ENCODE measurements at regions of chr20 and their contacts with region 1.

Region 1: DNA sequence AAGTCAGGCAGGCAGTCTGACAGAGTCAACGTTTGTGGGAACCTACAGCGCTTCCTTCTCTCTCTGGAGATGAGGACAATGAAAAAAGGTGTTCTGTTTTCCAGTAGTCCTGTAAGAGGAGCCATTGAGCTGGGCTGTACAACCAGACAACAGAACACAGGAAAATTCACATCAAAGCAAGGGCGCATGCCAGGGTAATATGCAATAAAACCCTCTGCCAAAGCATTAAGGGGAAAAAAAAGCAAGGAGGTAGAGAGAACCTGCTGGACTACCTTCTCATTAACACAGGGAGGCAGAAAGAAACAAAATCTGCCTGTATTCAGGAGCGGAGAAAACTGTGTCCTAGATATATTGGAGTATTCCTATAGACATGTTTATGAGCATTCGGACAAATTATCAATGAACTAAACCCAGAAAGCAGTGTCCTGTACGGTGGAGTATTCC is 1.3 kb downstream of the RNF24 start:
- DNase-seq: peak; percentile 91
- H3K4me3 ChIP-seq: peak overlapping the region; percentile 7 to 91 (median 86)
- H3K27ac ChIP-seq: peak overlapping the region; percentile 61
- H3K4me1 ChIP-seq: peaks cover 24% of the 10 kb centered on the region
- H3K27me3 ChIP-seq: no peaks in the 10 kb centered on the region
- CTCF ChIP-seq: peak; percentile 68 to 91

Region 2: GRCh38 chr20:3781153-3781910 is 232.7 kb before region 1 on chr20 and contains the start of gene SPEF1:
- CTCF ChIA-PET with region 1: interaction called, 3 read pairs
- dilution Hi-C with region 1: loop called (anchors 5 kb)
- in situ Hi-C with region 1: no loop called
- intact Hi-C with region 1: no loop called
- DNase-seq: peak; percentile 88
- H3K4me3 ChIP-seq: peak within 1 kb of the TSS; percentile 2 to 55 (median 51)
- H3K27ac ChIP-seq: peak within 1 kb of the TSS; percentile 11
- H3K4me1 ChIP-seq: peaks cover 44% of the 10 kb centered on the region
- H3K27me3 ChIP-seq: no peaks in the 10 kb centered on the region
- CTCF ChIP-seq: peak; percentile 7 to 56
- total RNA-seq, gene SPEF1: 0.17 to 0.26 TPM

Region 3: DNA sequence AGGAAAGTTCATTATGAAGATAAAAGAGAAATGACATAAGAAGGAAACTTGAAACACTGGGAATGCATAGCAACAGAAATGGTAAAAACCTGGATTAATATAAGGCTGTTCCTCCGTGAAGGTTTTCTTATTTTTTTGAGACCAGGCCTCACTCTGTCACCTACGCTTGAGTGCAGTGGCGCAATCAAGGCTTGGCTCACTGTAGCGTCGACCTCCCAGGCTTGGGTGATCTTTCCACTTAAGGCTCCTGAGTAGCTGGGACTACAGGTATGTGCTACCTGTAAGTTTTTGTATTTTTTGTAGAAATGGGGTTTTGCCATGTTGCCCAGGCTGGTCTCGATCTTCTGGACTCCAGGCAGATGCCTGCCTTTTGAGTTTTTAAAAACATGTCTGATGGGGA is 73.1 kb before region 1 on chr20:
- CTCF ChIA-PET with region 1: no interaction called
- dilution Hi-C with region 1: no loop called
- in situ Hi-C with region 1: no loop called
- intact Hi-C with region 1: loop called (anchors 5 kb)
- DNase-seq: no peak
- H3K4me3 ChIP-seq: no peak overlapping the region
- H3K27ac ChIP-seq: no peak overlapping the region
- H3K4me1 ChIP-seq: no peaks in the 10 kb centered on the region
- H3K27me3 ChIP-seq: no peaks in the 10 kb centered on the region
- CTCF ChIP-seq: no peak

Region 4: GRCh38 chr20:3970016-3970415 is 44.0 kb before region 1 on chr20:
- CTCF ChIA-PET with region 1: no interaction called
- dilution Hi-C with region 1: no loop called
- in situ Hi-C with region 1: no loop called
- intact Hi-C with region 1: no loop called
- DNase-seq: no peak
- H3K4me3 ChIP-seq: no peak overlapping the region
- H3K27ac ChIP-seq: no peak overlapping the region
- H3K4me1 ChIP-seq: no peaks in the 10 kb centered on the region
- H3K27me3 ChIP-seq: no peaks in the 10 kb centered on the region
- CTCF ChIP-seq: no peak

Region 5: DNA sequence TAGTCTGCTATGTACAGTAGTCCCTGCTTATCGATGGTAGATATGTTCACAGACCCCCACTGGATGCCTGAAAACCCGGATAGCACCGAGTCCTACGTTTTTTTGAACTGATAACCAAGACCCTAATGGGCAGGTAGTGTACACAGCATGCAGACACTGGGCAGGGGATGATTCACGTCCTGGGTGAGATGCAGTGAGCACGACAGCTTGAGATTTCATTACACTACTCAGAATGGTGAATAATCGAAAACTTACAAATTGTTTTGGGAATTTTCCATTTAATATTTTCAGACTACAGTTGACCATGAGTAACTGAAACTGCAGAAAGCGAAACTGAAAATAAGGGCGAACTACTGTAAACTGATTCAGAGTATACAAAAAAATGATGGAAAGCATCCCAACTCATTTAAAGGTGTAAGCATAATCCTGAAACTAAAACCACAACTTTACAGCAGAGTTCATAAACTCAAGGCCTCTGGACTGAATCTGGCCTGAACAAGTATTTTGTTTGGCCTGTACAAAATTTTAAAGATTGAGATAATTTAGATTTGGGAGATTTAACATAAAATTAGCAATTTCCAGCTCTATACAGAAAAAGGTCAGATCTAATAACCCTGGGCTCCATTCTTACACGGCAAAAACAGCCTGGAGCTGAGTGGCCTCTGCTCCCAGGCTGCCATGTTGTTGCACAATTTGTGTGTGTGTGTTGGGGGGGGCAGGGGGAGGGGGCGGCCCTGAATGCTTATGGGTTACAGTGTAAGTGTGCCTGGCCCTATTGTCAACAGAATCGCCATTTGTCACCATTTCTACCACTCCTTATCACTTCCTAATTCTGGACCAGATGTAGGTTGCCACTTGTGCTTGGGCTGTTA is 33.6 kb before region 1 on chr20:
- CTCF ChIA-PET with region 1: no interaction called
- dilution Hi-C with region 1: no loop called
- in situ Hi-C with region 1: no loop called
- intact Hi-C with region 1: no loop called
- DNase-seq: peak; percentile 54
- H3K4me3 ChIP-seq: peak overlapping the region; percentile 29 to 34 (median 29)
- H3K27ac ChIP-seq: peak overlapping the region; percentile 73
- H3K4me1 ChIP-seq: peaks cover 6% of the 10 kb centered on the region
- H3K27me3 ChIP-seq: no peaks in the 10 kb centered on the region
- CTCF ChIP-seq: no peak

Region 6: GRCh38 chr20:4064144-4064909 is 50.3 kb after region 1 on chr20:
- CTCF ChIA-PET with region 1: no interaction called
- dilution Hi-C with region 1: no loop called
- in situ Hi-C with region 1: no loop called
- intact Hi-C with region 1: no loop called
- DNase-seq: peak; percentile 79
- H3K4me3 ChIP-seq: no peak overlapping the region
- H3K27ac ChIP-seq: peak overlapping the region; percentile 22
- H3K4me1 ChIP-seq: peaks cover 47% of the 10 kb centered on the region
- H3K27me3 ChIP-seq: no peaks in the 10 kb centered on the region
- CTCF ChIP-seq: peak in 1 of 2 donors; percentile 11

Region 7: GRCh38 chr20:4076671-4077070 is 62.6 kb after region 1 on chr20:
- CTCF ChIA-PET with region 1: interaction called, 5 read pairs
- dilution Hi-C with region 1: loop called (anchors 5 kb)
- in situ Hi-C with region 1: loop called (anchors 5 to 10 kb)
- intact Hi-C with region 1: loop called (anchors 1 kb)
- DNase-seq: peak; percentile 80
- H3K4me3 ChIP-seq: no peak overlapping the region
- H3K27ac ChIP-seq: peak overlapping the region; percentile 1
- H3K4me1 ChIP-seq: peaks cover 5% of the 10 kb centered on the region
- H3K27me3 ChIP-seq: no peaks in the 10 kb centered on the region
- CTCF ChIP-seq: no peak

Region 8: DNA sequence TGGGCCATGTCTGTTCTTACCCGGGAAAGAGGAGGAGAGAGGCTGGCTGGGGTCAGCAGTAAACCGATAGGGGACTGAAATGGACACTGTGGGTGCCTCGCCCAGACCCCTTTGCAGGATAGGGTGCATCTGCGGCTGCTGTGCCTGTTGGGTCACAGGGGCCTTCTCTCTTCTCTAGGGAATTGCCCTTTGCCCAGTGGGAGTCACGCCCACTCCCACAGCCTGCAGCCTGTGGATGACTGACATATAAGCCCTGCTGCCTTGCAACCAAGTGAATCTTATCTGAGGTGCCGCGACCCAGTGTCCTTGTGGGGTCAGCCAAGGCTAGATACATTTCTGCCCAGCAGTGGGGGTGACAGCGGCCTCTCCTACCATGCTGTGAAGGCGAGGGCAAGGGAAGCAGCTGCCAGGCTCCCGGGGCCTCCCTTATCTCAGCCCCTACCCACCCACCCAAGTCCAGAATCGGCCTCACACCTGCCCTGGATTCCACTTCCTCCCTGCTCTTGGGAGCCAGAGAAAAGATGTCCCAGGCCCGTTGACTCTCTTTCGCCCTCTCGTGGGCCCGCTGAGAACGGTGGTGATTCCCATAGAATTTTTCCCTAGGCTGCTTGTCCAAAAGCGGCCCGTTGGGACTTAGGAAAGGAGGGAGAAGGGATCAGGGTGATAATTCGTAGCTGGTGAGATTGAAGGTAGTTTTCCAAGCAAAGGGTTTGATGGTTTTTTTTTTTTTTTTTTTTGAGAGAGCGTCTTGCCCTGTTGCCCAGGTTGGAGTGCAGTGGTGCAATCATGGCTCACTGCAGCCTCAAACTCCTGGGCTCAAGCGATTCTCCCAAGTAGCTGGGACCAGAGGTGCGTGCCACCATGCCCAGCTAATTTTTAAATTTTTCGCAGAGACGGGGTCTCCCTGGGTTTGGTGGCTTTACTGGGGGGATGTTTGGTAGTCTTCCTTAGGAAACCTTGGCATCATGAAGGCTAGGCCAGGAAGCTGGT is 77.7 kb after region 1 on chr20:
- CTCF ChIA-PET with region 1: interaction called, 15 read pairs
- dilution Hi-C with region 1: no loop called
- in situ Hi-C with region 1: no loop called
- intact Hi-C with region 1: loop called (anchors 2 kb)
- DNase-seq: peak; percentile 42
- H3K4me3 ChIP-seq: no peak overlapping the region
- H3K27ac ChIP-seq: no peak overlapping the region
- H3K4me1 ChIP-seq: no peaks in the 10 kb centered on the region
- H3K27me3 ChIP-seq: no peaks in the 10 kb centered on the region
- CTCF ChIP-seq: peak; percentile 77 to 86

Region 9: GRCh38 chr20:4102381-4102780 is 88.3 kb after region 1 on chr20:
- CTCF ChIA-PET with region 1: no interaction called
- dilution Hi-C with region 1: no loop called
- in situ Hi-C with region 1: no loop called
- intact Hi-C with region 1: no loop called
- DNase-seq: peak; percentile 78
- H3K4me3 ChIP-seq: no peak overlapping the region
- H3K27ac ChIP-seq: peak overlapping the region; percentile 1
- H3K4me1 ChIP-seq: peaks cover 5% of the 10 kb centered on the region
- H3K27me3 ChIP-seq: no peaks in the 10 kb centered on the region
- CTCF ChIP-seq: no peak